Calu3 (cell line): ENCODE measurements at regions of chr7 and their contacts with region 1.

Region 1: GRCh38 chr7:26365077-26365900 is 73.6 kb downstream of the SNX10 start:
- DNase-seq: peak; percentile 73
- H3K4me3 Mint-ChIP-seq: peak overlapping the region; percentile 10
- H3K27ac Mint-ChIP-seq: peak overlapping the region; percentile 54
- H3K4me1 Mint-ChIP-seq: peaks cover 44% of the 10 kb centered on the region
- H3K27me3 Mint-ChIP-seq: no peaks in the 10 kb centered on the region
- CTCF ChIP-seq: peak; percentile 85

Region 2: DNA sequence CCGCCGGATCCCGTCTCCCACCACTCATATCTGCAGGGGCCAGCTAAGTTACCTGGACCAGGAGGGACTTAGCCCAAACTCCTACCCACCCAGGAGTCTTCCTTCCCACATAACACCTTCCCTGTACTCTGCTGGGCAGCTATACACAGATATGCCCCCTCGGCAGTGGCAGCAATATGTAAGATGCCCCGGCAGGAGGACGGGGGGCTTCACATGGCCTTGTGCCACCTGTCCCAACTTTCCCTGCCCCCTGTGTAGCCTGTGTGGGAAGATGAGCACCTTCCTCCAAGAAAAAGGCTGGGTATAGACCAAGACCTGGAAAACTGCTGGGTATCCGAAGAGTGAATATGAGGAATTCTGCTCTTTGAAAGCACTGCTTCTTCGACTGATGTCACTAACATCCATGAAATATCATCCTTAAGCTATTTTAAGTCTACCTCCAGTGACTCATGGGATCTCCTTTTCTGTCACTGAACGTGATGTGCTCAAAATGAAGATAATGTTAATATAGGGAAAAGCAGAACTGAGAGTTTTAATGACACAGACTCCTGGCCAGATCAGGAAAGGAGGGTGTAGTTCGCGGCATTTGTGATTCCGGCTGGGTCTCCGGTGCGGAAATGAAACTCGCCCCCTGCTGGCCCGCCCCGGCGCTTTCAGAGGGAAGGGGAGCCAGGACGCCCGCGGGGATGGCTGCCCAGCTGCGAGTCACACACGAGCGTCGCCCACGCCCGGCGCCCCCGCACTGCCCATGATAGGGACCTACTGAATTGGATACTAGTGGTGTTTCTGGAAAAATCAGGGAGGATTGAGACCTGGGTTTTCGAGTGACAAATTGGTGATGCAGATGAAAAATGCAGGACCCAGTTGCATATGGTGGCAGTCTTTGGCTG is 470.1 kb before region 1 on chr7:
- CTCF ChIA-PET with region 1: interaction called, 65 read pairs
- intact Hi-C with region 1: loop called (anchors 1 kb)
- DNase-seq: peak; percentile 91
- H3K4me3 Mint-ChIP-seq: peak overlapping the region; percentile 62
- H3K27ac Mint-ChIP-seq: no peak overlapping the region
- H3K4me1 Mint-ChIP-seq: peaks cover 30% of the 10 kb centered on the region
- H3K27me3 Mint-ChIP-seq: peaks cover 21% of the 10 kb centered on the region
- CTCF ChIP-seq: peak; percentile 93

Region 3: GRCh38 chr7:26168458-26169023 is 196.7 kb before region 1 on chr7:
- CTCF ChIA-PET with region 1: no interaction called
- intact Hi-C with region 1: no loop called
- DNase-seq: no peak
- H3K4me3 Mint-ChIP-seq: no peak overlapping the region
- H3K27ac Mint-ChIP-seq: no peak overlapping the region
- H3K4me1 Mint-ChIP-seq: peaks cover 51% of the 10 kb centered on the region
- H3K27me3 Mint-ChIP-seq: no peaks in the 10 kb centered on the region
- CTCF ChIP-seq: no peak

Region 4: GRCh38 chr7:26200444-26201246 is 164.6 kb before region 1 on chr7 and contains the start of gene HNRNPA2B1:
- CTCF ChIA-PET with region 1: interaction called, 6 read pairs
- intact Hi-C with region 1: loop called (anchors 5 kb)
- DNase-seq: peak; percentile 99
- H3K4me3 Mint-ChIP-seq: peak within 1 kb of the TSS; percentile 96
- H3K27ac Mint-ChIP-seq: peak within 1 kb of the TSS; percentile 99
- H3K4me1 Mint-ChIP-seq: peaks cover 37% of the 10 kb centered on the region
- H3K27me3 Mint-ChIP-seq: no peaks in the 10 kb centered on the region
- CTCF ChIP-seq: no peak
- total RNA-seq, gene HNRNPA2B1: 880 and 924 TPM in 2 replicates

Region 5: GRCh38 chr7:26250239-26250638 is 115.0 kb before region 1 on chr7:
- CTCF ChIA-PET with region 1: no interaction called
- intact Hi-C with region 1: no loop called
- DNase-seq: no peak
- H3K4me3 Mint-ChIP-seq: no peak overlapping the region
- H3K27ac Mint-ChIP-seq: no peak overlapping the region
- H3K4me1 Mint-ChIP-seq: no peaks in the 10 kb centered on the region
- H3K27me3 Mint-ChIP-seq: no peaks in the 10 kb centered on the region
- CTCF ChIP-seq: no peak

Region 6: GRCh38 chr7:26291699-26292538 is 73.4 kb before region 1 on chr7 and contains the start of gene SNX10:
- CTCF ChIA-PET with region 1: interaction called, 7 read pairs
- intact Hi-C with region 1: loop called (anchors 1 kb)
- DNase-seq: peak; percentile 92
- H3K4me3 Mint-ChIP-seq: peak within 1 kb of the TSS; percentile 82
- H3K27ac Mint-ChIP-seq: peak within 1 kb of the TSS; percentile 20
- H3K4me1 Mint-ChIP-seq: peaks cover 13% of the 10 kb centered on the region
- H3K27me3 Mint-ChIP-seq: no peaks in the 10 kb centered on the region
- CTCF ChIP-seq: peak; percentile 69
- total RNA-seq, gene SNX10: 19.6 and 22.1 TPM in 2 replicates

Region 7: GRCh38 chr7:26307226-26307625 is 58.1 kb before region 1 on chr7:
- CTCF ChIA-PET with region 1: no interaction called
- intact Hi-C with region 1: no loop called
- DNase-seq: no peak
- H3K4me3 Mint-ChIP-seq: no peak overlapping the region
- H3K27ac Mint-ChIP-seq: no peak overlapping the region
- H3K4me1 Mint-ChIP-seq: no peaks in the 10 kb centered on the region
- H3K27me3 Mint-ChIP-seq: no peaks in the 10 kb centered on the region
- CTCF ChIP-seq: no peak

Region 8: GRCh38 chr7:26490650-26491624 is 125.6 kb after region 1 on chr7:
- CTCF ChIA-PET with region 1: interaction called, 12 read pairs
- intact Hi-C with region 1: no loop called
- DNase-seq: peak; percentile 61
- H3K4me3 Mint-ChIP-seq: no peak overlapping the region
- H3K27ac Mint-ChIP-seq: peak overlapping the region; percentile 30
- H3K4me1 Mint-ChIP-seq: peaks cover 47% of the 10 kb centered on the region
- H3K27me3 Mint-ChIP-seq: no peaks in the 10 kb centered on the region
- CTCF ChIP-seq: no peak

Region 9: GRCh38 chr7:26549281-26549943 is 184.1 kb after region 1 on chr7:
- CTCF ChIA-PET with region 1: interaction called, 15 read pairs
- intact Hi-C with region 1: no loop called
- DNase-seq: peak; percentile 94
- H3K4me3 Mint-ChIP-seq: peak overlapping the region; percentile 12
- H3K27ac Mint-ChIP-seq: peak overlapping the region; percentile 85
- H3K4me1 Mint-ChIP-seq: peaks cover 70% of the 10 kb centered on the region
- H3K27me3 Mint-ChIP-seq: no peaks in the 10 kb centered on the region
- CTCF ChIP-seq: peak; percentile 45

Region 10: DNA sequence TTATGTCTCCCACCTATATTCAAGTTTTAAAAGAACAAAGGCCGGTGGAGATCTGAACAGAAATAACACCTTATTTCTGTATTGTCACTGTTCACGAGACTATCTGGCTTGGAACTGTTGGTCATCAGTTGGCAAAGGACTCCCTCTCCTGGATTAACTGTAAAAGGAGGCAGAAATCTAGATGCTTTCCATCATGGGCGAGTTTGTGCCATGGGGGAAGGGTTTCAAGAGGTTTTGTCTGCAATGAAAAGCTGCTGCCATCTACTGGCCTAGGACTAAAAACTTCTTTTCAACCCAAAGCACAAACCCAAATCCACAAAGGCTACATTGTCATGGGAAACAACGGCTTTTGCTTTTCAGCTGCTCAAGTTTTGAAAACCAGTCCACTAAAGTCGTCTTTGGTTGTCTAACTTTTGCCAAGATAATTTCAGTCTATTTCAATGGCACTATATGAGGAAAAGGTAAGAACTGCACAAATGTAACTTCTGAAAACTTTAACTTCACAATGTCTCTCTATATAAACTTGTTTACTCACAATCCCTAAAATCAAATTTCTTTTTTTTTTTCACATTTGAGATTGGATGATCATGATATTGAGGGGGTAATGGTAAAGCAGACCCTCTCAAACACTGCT is 302.3 kb after region 1 on chr7:
- CTCF ChIA-PET with region 1: interaction called, 131 read pairs
- intact Hi-C with region 1: loop called (anchors 1 kb)
- DNase-seq: peak; percentile 92
- H3K4me3 Mint-ChIP-seq: no peak overlapping the region
- H3K27ac Mint-ChIP-seq: peak overlapping the region; percentile 63
- H3K4me1 Mint-ChIP-seq: peaks cover 57% of the 10 kb centered on the region
- H3K27me3 Mint-ChIP-seq: no peaks in the 10 kb centered on the region
- CTCF ChIP-seq: peak; percentile 96